B cell (primary cell): ENCODE measurements at regions of chr1 and their contacts with region 1.

Region 1: GRCh38 chr1:8858888-8859706 is 19.4 kb downstream of the ENO1 start:
- DNase-seq: peak; percentile 73
- ATAC-seq: peak; percentile 83
- H3K4me3 ChIP-seq: no peak overlapping the region
- H3K4me3 Mint-ChIP-seq: no peak overlapping the region
- H3K27ac ChIP-seq: no peak overlapping the region
- H3K27ac Mint-ChIP-seq: peak overlapping the region; percentile 18
- H3K4me1 ChIP-seq: peaks cover 7 to 8% of the 10 kb centered on the region in 2 donors
- H3K4me1 Mint-ChIP-seq: peaks cover 18% of the 10 kb centered on the region
- H3K27me3 ChIP-seq: no peaks in the 10 kb centered on the region
- H3K27me3 Mint-ChIP-seq: no peaks in the 10 kb centered on the region
- CTCF ChIP-seq: peak; percentile 77

Region 2: GRCh38 chr1:8061210-8061609 is 797.9 kb before region 1 on chr1:
- CTCF ChIA-PET with region 1: no interaction called
- POLR2A ChIA-PET with region 1: no interaction called
- intact Hi-C with region 1: no loop called
- DNase-seq: no peak
- ATAC-seq: no peak
- H3K4me3 ChIP-seq: no peak overlapping the region
- H3K4me3 Mint-ChIP-seq: no peak overlapping the region
- H3K27ac ChIP-seq: no peak overlapping the region
- H3K27ac Mint-ChIP-seq: no peak overlapping the region
- H3K4me1 ChIP-seq: no peaks in the 10 kb centered on the region
- H3K4me1 Mint-ChIP-seq: no peaks in the 10 kb centered on the region
- H3K27me3 ChIP-seq: peaks cover 0 to 4% (median 1%) of the 10 kb centered on the region in 4 experiments
- H3K27me3 Mint-ChIP-seq: peaks cover 34% of the 10 kb centered on the region
- CTCF ChIP-seq: no peak

Region 3: GRCh38 chr1:8878448-8879347 is 19.6 kb after region 1 on chr1 and contains the start of gene ENO1:
- CTCF ChIA-PET with region 1: interaction called, 54 read pairs
- POLR2A ChIA-PET with region 1: interaction called, 4 read pairs
- intact Hi-C with region 1: no loop called
- DNase-seq: peak; percentile 100
- ATAC-seq: peak; percentile 87
- H3K4me3 ChIP-seq: peak within 1 kb of the TSS; percentile 78 to 94 (median 88)
- H3K4me3 Mint-ChIP-seq: peak within 1 kb of the TSS; percentile 95
- H3K27ac ChIP-seq: peak within 1 kb of the TSS; percentile 94 to 95
- H3K27ac Mint-ChIP-seq: peak within 1 kb of the TSS; percentile 97
- H3K4me1 ChIP-seq: peaks cover 31 to 36% of the 10 kb centered on the region in 2 donors
- H3K4me1 Mint-ChIP-seq: peaks cover 46% of the 10 kb centered on the region
- H3K27me3 ChIP-seq: no peaks in the 10 kb centered on the region
- H3K27me3 Mint-ChIP-seq: no peaks in the 10 kb centered on the region
- CTCF ChIP-seq: no peak
- total RNA-seq, gene ENO1: 223 and 237 TPM in 2 replicates